Colonic mucosa (tissue), 4 donors: ENCODE measurements at regions of chr9 and their contacts with region 1.

Region 1: GRCh38 chr9:137286975-137287383 is 9.5 kb downstream of the TOR4A start:
- DNase-seq: peak; percentile 78
- H3K4me3 ChIP-seq: no peak overlapping the region
- H3K27ac ChIP-seq: no peak overlapping the region
- H3K4me1 ChIP-seq: no peaks in the 10 kb centered on the region
- H3K27me3 ChIP-seq: no peaks in the 10 kb centered on the region
- CTCF ChIP-seq: peak; percentile 48

Region 2: DNA sequence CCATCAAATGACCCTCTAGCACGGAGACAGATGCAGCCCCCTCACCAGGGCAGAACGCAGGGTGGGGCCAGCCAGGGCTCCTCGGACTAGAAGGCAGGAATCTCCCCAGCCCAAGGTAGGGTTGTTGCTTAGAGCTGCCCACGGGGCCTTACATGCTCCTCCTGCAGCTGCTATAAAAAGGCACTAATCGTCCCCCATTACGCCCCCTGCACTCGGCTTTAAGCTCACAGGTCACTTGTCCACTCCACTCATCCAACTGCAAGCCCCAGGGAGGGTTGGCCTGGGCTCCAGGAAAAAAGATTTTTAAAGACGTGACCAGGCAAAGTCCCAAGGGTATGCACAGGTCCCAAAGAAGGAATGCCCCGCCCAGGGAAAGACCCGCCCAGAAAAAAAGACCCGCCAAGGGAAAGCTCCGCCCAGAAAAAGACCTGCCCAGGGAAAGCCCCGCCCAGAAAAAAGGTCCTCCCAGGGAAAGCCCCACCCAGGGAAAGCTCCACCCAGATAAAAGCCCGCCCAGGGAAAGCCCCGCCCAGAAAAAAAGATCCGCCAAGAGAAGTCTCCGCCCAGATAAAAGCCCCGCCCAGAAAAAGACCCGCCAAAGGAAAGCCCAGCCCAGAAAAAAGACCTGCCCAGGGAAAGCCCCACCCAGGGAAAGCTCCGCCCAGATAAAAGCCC is 136.9 kb before region 1 on chr9:
- intact Hi-C with region 1: no loop called
- DNase-seq: peak; percentile 75
- H3K4me3 ChIP-seq: no peak overlapping the region
- H3K27ac ChIP-seq: no peak overlapping the region
- H3K4me1 ChIP-seq: no peaks in the 10 kb centered on the region
- H3K27me3 ChIP-seq: peaks cover 5% of the 10 kb centered on the region
- CTCF ChIP-seq: no peak

Region 3: DNA sequence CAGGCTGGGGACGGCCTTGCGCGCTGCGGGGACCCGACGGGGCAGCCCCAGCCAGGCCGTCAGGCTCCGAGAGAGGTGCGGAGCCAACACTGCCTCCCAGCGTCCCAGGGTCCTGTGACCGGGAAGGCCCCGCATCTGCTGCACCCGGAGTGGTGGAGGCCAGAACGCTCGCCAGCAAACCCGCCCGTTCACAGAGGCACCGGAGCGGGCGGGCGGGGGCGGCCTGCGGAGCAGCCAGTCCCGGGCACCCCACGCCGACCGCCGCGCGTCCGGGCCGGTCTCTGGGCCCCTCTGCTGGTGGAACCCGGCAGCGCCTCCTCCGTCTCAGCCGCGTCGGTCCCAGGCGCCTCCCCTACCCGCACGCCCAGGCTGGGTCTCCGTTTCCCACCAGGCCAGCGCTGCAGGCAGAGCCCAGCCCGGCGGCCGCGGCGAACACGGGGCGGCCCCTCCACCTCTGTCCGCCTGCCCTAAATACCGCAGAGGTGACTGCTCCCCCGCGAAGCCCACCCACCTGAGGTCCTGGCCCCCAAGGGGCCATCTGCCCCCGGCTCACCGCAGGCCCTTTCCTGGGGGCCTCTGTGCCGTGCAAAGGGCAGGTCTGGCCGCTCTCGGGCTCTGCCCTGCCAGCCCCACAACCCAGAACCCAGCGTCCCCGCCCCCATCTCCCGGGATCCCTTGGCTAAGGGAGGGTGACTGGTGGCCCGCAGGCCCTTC is 120.1 kb after region 1 on chr9:
- intact Hi-C with region 1: loop called (anchors 2 kb)
- DNase-seq: peak; percentile 76
- H3K4me3 ChIP-seq: peak overlapping the region; percentile 34
- H3K27ac ChIP-seq: peak overlapping the region; percentile 23
- H3K4me1 ChIP-seq: peaks cover 21% of the 10 kb centered on the region
- H3K27me3 ChIP-seq: no peaks in the 10 kb centered on the region
- CTCF ChIP-seq: peak; percentile 81

Region 4: DNA sequence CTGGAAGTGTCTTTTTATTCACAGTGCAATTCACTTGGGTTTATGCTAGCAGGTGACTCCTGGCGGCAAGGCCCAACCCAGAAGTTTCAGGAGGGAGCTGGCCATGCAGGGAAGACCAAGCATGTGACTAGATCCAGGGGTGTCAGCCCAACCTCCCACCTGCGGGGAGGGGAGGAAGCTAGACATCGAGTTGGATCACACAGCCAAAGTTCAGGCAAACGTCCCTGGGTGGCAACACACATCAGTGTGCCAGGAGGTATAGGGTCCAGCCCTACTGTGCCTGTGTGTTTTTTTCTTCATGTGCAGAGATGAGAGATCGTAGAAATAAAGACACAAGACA is 238.0 kb after region 1 on chr9:
- intact Hi-C with region 1: loop called (anchors 5 kb)
- DNase-seq: no peak
- H3K4me3 ChIP-seq: no peak overlapping the region
- H3K27ac ChIP-seq: no peak overlapping the region
- H3K4me1 ChIP-seq: no peaks in the 10 kb centered on the region
- H3K27me3 ChIP-seq: no peaks in the 10 kb centered on the region
- CTCF ChIP-seq: no peak